ENCODE measurements at regions of chr18 and their contacts with region 1.

Region 1: GRCh38 chr18:48781163-48781987 is 169.4 kb downstream of the SMAD7 start:
- DNase-seq: peak; percentile 92
- ATAC-seq: peak; percentile 87
- H3K4me3 ChIP-seq: peak overlapping the region; percentile 45 to 71 (median 46)
- H3K27ac ChIP-seq: peak overlapping the region; percentile 98
- H3K4me1 ChIP-seq: peaks cover 55% of the 10 kb centered on the region
- H3K27me3 ChIP-seq: no peaks in the 10 kb centered on the region
- CTCF ChIP-seq: peak; percentile 11; the same call in 1 of the 2 replicates
- EP300 ChIP-seq: peak; percentile 50 to 74; a peak in 2 of 4 replicates
- POLR2A ChIP-seq: peak; percentile 57 to 65; a peak in 2 of 4 replicates
- RAD21 ChIP-seq: peak; percentile 43; the same call in 1 of the 2 replicates

Region 2: GRCh38 chr18:48868468-48869466 is 87.4 kb after region 1 on chr18:
- CTCF ChIA-PET with region 1: no interaction called
- POLR2A ChIA-PET with region 1: no interaction called
- in situ Hi-C with region 1: loop called (anchors 5 kb)
- intact Hi-C with region 1: no loop called
- DNase-seq: peak; percentile 69
- ATAC-seq: peak; percentile 90
- H3K4me3 ChIP-seq: peak overlapping the region in 1 of 3 experiments; percentile 35; a peak in 2 of 6 replicates
- H3K27ac ChIP-seq: no peak overlapping the region
- H3K4me1 ChIP-seq: peaks cover 29% of the 10 kb centered on the region
- H3K27me3 ChIP-seq: no peaks in the 10 kb centered on the region
- CTCF ChIP-seq: no peak
- EP300 ChIP-seq: no peak
- POLR2A ChIP-seq: no peak
- RAD21 ChIP-seq: no peak

Region 3: GRCh38 chr18:49041435-49042245 is 260.3 kb after region 1 on chr18:
- CTCF ChIA-PET with region 1: interaction called, 8 read pairs
- POLR2A ChIA-PET with region 1: no interaction called
- in situ Hi-C with region 1: no loop called
- intact Hi-C with region 1: loop called (anchors 1 kb)
- DNase-seq: peak; percentile 40
- ATAC-seq: peak; percentile 85
- H3K4me3 ChIP-seq: no peak overlapping the region
- H3K27ac ChIP-seq: no peak overlapping the region
- H3K4me1 ChIP-seq: no peaks in the 10 kb centered on the region
- H3K27me3 ChIP-seq: no peaks in the 10 kb centered on the region
- CTCF ChIP-seq: peak; percentile 65
- EP300 ChIP-seq: no peak
- POLR2A ChIP-seq: no peak
- RAD21 ChIP-seq: 0 out of 2 replicates have a peak, but pooled peaks have one; percentile 42